Posterior vena cava (tissue), 2 donors: ENCODE measurements at regions of chr15 and their contacts with region 1.

Region 1: DNA sequence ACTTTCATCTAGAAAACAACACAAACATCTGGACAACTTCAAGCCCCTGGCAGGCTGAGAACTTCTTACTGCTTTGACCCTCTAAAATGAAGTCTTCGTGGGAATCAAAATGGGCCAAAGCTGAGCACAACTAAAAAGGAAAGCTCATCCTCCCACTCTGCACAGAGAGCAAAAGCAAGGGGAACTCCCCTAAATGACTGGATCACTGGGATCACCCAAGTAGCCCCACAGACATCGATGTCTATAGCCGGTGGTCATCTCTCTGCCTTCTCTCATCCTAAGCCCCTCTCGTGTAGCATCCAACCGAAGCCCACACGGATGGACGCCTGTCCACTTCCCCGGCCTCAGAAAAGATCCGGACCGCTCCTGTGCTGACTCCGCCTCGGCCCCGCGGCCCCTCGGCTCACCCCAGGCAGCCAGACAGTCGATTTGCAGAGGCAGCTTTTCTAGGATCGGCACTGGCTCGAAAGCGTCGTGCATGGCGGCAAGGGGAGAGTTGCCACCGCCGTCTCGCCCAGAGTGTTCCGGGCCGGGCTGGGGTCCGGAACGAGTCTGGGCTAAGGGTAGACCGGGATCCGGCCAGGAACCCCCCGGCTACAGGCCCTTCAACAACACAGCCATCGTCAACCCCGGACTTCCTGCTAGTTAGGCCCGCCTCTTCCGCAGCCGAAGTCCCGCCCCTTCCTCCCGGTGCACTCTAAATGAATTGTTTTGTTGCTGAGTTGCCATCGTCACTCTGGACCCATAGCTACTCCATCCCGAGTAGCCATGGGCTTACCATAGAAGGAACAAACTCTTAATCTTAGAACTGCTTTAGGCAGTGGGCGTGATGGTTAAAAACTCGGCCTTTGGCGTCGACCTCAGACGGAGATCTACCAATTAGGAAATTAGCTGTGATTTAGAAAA is at the start of gene VPS39:
- DNase-seq: peak; percentile 94
- total RNA-seq, gene VPS39: 48.4 to 58.0 TPM

Region 2: GRCh38 chr15:42253300-42253699 is 45.4 kb after region 1 on chr15:
- intact Hi-C with region 1: loop called in 1 of 2 experiments (anchors 1 kb)
- DNase-seq: no peak

Region 3: DNA sequence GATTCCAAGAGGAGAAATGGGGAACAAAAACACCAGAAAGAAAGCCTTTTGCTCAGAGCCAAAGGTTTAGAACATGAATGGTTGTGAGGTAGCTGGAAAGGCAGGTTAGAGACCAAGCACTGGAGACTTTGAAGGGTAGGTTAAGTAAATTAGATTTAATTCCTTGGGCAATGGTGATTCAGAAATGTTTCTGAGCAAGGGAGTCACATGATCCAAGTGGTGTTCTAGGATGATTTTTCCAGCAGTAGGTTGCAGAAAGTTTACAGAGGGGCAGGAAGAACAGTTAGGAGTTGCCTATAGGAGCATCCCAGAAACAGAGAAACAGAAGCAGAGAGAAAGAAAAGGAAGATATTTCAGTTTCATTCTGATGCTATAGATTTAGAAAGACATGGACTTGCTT is 1758.7 kb after region 1 on chr15:
- intact Hi-C with region 1: no loop called
- DNase-seq: no peak